ENCODE measurements at regions of chr4 and their contacts with region 1.

Region 1: DNA sequence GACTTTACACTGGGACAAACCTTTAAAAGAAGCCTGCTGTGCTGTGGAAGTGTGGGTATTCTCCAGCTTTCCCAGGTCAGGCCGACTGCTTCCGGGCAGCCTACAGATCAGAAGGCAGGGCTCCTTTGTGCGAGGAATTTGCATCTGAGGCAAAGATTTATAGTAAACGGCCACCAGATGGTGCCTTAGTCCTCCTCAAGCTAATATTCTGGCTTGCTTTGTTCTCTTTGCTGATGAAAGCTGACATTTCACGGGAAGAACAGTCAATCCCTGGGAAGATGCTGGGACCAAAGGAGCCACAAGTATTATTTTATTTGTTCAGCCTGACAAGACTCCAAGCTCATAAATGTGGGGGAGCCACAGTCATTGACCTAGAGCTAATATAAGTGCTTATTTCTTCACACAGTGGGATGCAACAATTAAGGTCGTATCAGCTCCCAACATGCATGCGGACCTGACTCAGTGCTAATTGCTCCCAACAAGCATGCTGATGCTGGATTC is 120.7 kb upstream of the TRIM2 start:
- H3K4me3 ChIP-seq: no peak overlapping the region
- H3K27ac ChIP-seq: no peak overlapping the region
- H3K4me1 ChIP-seq: no peaks in the 10 kb centered on the region
- CTCF ChIP-seq: no peak; the same call in 1 of the 2 replicates

Region 2: GRCh38 chr4:152849350-152849749 is 234.1 kb before region 1 on chr4:
- CTCF ChIA-PET with region 1: interaction called, 12 read pairs
- POLR2A ChIA-PET with region 1: no interaction called
- H3K4me3 ChIP-seq: no peak overlapping the region
- H3K27ac ChIP-seq: no peak overlapping the region
- H3K4me1 ChIP-seq: no peaks in the 10 kb centered on the region; the same call in 1 of the 2 replicates
- CTCF ChIP-seq: no peak

Region 3: DNA sequence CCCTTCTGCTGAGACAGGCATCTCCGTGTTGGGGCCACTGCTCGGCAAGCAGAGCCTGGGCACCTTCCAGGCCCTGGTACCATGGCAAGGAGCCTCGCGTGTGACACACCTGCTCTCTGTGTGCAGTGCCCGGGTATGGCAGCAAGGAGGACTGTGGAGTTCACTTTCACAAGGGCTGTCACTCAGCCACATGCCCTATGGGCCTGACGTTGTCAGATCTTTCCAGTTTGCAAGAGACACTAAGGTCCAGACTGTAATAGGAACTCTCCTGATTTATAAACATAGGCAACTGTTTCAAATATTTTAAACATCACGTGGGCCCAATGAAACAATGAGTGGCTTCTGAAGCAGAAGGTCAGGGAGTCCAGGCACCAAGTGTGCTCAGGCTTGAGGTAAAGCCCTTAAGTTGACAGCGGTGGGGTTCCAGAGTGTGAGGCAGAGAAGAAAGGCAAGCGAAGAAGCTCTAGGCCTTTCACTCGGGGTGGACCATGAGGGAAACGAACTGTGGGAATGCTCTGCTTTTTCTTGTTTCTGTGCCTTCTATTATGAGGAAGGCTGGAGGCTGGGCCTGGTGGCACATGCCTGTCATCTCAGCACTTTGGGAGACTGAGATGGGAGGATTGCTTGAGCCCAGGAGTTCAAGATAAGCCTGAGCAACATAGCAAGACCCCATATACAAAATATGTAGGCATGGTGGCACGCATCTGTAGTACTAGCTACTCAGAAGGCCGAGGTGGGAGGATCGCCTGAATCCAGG is 12.1 kb after region 1 on chr4:
- CTCF ChIA-PET with region 1: interaction called, 30 read pairs
- POLR2A ChIA-PET with region 1: no interaction called
- H3K4me3 ChIP-seq: no peak overlapping the region
- H3K27ac ChIP-seq: no peak overlapping the region
- H3K4me1 ChIP-seq: no peaks in the 10 kb centered on the region
- CTCF ChIP-seq: no peak

Region 4: GRCh38 chr4:153127760-153128494 is 44.4 kb after region 1 on chr4:
- CTCF ChIA-PET with region 1: interaction called, 101 read pairs
- POLR2A ChIA-PET with region 1: interaction called, 5 read pairs
- H3K4me3 ChIP-seq: no peak overlapping the region
- H3K27ac ChIP-seq: no peak overlapping the region
- H3K4me1 ChIP-seq: no peaks in the 10 kb centered on the region
- CTCF ChIP-seq: peak; percentile 43; the same call in 1 of the 2 replicates

Region 5: GRCh38 chr4:153318696-153319320 is 235.3 kb after region 1 on chr4:
- CTCF ChIA-PET with region 1: interaction called, 10 read pairs
- POLR2A ChIA-PET with region 1: no interaction called
- H3K4me3 ChIP-seq: no peak overlapping the region
- H3K27ac ChIP-seq: no peak overlapping the region
- H3K4me1 ChIP-seq: no peaks in the 10 kb centered on the region
- CTCF ChIP-seq: no peak